Dorsolateral prefrontal cortex (tissue), 120 donors: ENCODE measurements at regions of chr1 and their contacts with region 1.

Region 1: DNA sequence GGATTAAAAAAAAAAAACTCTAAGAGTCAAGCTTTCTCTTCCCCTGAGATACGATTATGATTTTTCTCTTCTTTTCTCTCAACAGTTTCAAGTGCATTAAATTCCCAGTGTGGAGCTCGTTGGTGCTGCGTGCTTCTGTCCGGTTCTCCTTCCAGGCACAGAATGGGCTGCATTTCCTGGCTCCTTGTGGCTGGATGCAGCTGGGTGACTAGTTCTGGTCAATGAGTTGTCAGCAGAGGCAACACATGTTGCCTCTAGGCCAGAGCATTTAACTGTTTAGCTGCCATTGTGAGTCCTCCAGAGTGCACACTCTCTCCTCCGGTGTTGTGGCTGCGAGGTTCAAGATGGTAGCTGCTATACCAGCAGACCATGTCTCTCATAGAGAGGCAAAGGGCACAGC is 312.9 kb downstream of the RRAGC start:
- DNase-seq: peak in 4 of 10 donors; percentile 25 to 54 (median 32)
- H3K4me3 ChIP-seq: no peak overlapping the region
- H3K27ac ChIP-seq: peak overlapping the region in 18 of 59 donors; percentile 2 to 58 (median 20)
- H3K27me3 ChIP-seq: peaks cover 0 to 2% (median 0%) of the 10 kb centered on the region in 45 donors
- CTCF ChIP-seq: no peak

Region 2: DNA sequence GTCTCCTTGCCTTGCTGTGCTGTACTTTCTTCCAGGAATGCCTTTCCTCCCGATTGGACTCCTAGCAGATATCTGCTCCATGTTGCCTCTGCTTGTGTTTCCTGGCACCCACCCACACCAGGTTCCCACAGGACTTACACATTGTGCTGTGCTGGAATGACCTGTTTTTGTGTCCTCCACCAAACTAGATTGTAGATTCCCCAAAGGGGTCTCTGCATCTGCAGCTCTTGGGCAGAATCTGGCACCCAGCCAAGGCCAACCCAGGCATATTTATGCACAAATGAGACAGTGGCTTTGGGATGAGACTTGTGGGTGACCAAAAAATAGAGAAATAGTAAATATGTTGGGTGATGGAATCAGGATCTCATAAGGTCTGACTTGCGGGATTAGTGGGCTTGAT is 34.8 kb after region 1 on chr1:
- intact Hi-C with region 1: loop called in 1 of 2 experiments (anchors 5 kb)
- DNase-seq: no peak
- H3K4me3 ChIP-seq: no peak overlapping the region
- H3K27ac ChIP-seq: no peak overlapping the region
- H3K27me3 ChIP-seq: peaks cover 0 to 23% (median 6%) of the 10 kb centered on the region in 45 donors
- CTCF ChIP-seq: no peak

Region 3: GRCh38 chr1:38859561-38860453 is 313.2 kb after region 1 on chr1 and contains the start of gene RRAGC:
- intact Hi-C with region 1: no loop called
- DNase-seq: peak; percentile 99 to 100 (median 100)
- H3K4me3 ChIP-seq: peak within 1 kb of the TSS; percentile 70 to 100 (median 95)
- H3K27ac ChIP-seq: peak within 1 kb of the TSS; percentile 66 to 97 (median 89)
- H3K27me3 ChIP-seq: no peaks in the 10 kb centered on the region
- CTCF ChIP-seq: peak in 9 of 56 donors; percentile 2 to 31 (median 10)
- total RNA-seq, gene RRAGC: 18.0 to 36.1 (median 25.7) TPM